ENCODE measurements at regions of chr6 and their contacts with region 1.

Region 1: DNA sequence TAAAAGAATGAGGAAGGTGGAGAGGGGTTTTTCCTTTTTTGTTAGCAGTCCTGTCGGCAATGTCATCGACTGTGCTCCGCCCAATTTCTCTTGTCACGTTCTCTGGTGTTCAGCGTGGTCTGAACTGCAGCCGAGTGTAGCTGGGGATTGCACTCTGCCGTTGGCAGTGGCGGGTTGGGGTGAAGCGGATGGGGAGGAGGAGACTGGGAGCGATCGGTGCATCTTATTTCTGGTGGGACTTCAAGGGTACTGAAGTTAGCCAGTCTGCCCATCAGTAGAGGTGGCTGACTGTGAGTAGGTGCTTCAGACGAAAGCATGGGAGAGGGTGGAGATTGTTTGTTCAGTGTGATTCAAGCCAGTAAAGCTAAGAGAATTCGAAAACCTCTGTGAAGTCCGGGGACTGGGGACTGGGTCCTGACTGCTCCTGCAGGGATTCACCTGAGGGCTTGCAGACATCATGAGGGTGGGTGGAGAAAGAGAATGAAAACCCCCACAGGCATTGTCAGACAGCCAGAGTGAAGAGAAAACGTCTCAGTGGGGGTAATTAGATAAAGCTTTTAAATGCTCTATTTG is 5.1 kb downstream of the RREB1 start:
- DNase-seq: peak; percentile 6 to 84 (median 56)
- ATAC-seq: peak; percentile 64
- H3K4me3 ChIP-seq: peak overlapping the region in 1 of 2 experiments; percentile 16
- H3K4me3 Mint-ChIP-seq: peak overlapping the region; percentile 82
- H3K27ac ChIP-seq: no peak overlapping the region
- H3K27ac Mint-ChIP-seq: peak overlapping the region; percentile 93
- H3K4me1 ChIP-seq: peaks cover 62% of the 10 kb centered on the region
- H3K4me1 Mint-ChIP-seq: peaks cover 77% of the 10 kb centered on the region
- H3K27me3 ChIP-seq: no peaks in the 10 kb centered on the region
- H3K27me3 Mint-ChIP-seq: no peaks in the 10 kb centered on the region
- CTCF ChIP-seq: no peak

Region 2: GRCh38 chr6:7080311-7080710 is 32.5 kb before region 1 on chr6:
- CTCF ChIA-PET with region 1: no interaction called
- POLR2A ChIA-PET with region 1: no interaction called
- intact Hi-C with region 1: no loop called
- DNase-seq: no peak
- ATAC-seq: no peak
- H3K4me3 ChIP-seq: no peak overlapping the region
- H3K4me3 Mint-ChIP-seq: no peak overlapping the region
- H3K27ac ChIP-seq: no peak overlapping the region
- H3K27ac Mint-ChIP-seq: no peak overlapping the region
- H3K4me1 ChIP-seq: peaks cover 4% of the 10 kb centered on the region
- H3K4me1 Mint-ChIP-seq: peaks cover 6% of the 10 kb centered on the region
- H3K27me3 ChIP-seq: no peaks in the 10 kb centered on the region
- H3K27me3 Mint-ChIP-seq: no peaks in the 10 kb centered on the region
- CTCF ChIP-seq: no peak

Region 3: GRCh38 chr6:7135755-7136154 is 22.9 kb after region 1 on chr6:
- CTCF ChIA-PET with region 1: interaction called, 7 read pairs
- POLR2A ChIA-PET with region 1: interaction called, 4 read pairs
- intact Hi-C with region 1: loop called (anchors 1 kb)
- DNase-seq: no peak
- ATAC-seq: no peak
- H3K4me3 ChIP-seq: no peak overlapping the region
- H3K4me3 Mint-ChIP-seq: no peak overlapping the region
- H3K27ac ChIP-seq: peak overlapping the region in 1 of 2 experiments; percentile 5
- H3K27ac Mint-ChIP-seq: peak overlapping the region; percentile 67
- H3K4me1 ChIP-seq: peaks cover 56% of the 10 kb centered on the region
- H3K4me1 Mint-ChIP-seq: peaks cover 83% of the 10 kb centered on the region
- H3K27me3 ChIP-seq: no peaks in the 10 kb centered on the region
- H3K27me3 Mint-ChIP-seq: no peaks in the 10 kb centered on the region
- CTCF ChIP-seq: no peak

Region 4: DNA sequence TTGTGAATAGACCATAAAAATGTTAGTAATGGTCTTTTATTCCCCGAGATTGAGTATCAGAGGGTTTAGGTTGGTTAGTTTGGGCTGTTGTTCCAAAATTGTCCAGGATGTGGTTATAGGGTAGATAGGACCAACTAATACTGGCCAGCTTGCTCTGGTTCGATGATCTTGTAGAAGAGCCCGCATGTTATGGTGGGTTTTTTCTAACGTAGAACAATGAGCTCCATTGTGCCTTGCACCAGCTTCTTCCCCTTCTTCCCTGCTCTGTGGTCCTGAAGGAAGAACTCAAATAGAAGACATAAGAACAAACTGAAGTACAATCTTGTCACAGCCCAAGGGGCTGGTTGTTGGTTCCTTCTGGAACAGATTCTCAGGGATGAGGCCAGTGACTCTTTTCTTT is 65.5 kb after region 1 on chr6:
- CTCF ChIA-PET with region 1: no interaction called
- POLR2A ChIA-PET with region 1: no interaction called
- intact Hi-C with region 1: no loop called
- DNase-seq: no peak
- ATAC-seq: no peak
- H3K4me3 ChIP-seq: no peak overlapping the region
- H3K4me3 Mint-ChIP-seq: no peak overlapping the region
- H3K27ac ChIP-seq: no peak overlapping the region
- H3K27ac Mint-ChIP-seq: no peak overlapping the region
- H3K4me1 ChIP-seq: no peaks in the 10 kb centered on the region
- H3K4me1 Mint-ChIP-seq: peaks cover 3% of the 10 kb centered on the region
- H3K27me3 ChIP-seq: no peaks in the 10 kb centered on the region
- H3K27me3 Mint-ChIP-seq: no peaks in the 10 kb centered on the region
- CTCF ChIP-seq: no peak